GM12878 (cell line): ENCODE measurements at regions of chr5 and their contacts with region 1.

Region 1: GRCh38 chr5:132473019-132473531 is 17.5 kb downstream of the IRF1 start:
- DNase-seq: no peak
- ATAC-seq: peak; percentile 84
- H3K4me3 ChIP-seq: no peak overlapping the region
- H3K27ac ChIP-seq: peak overlapping the region; percentile 68
- H3K4me1 ChIP-seq: peaks cover 38% of the 10 kb centered on the region
- H3K27me3 ChIP-seq: no peaks in the 10 kb centered on the region
- CTCF ChIP-seq: no peak
- EP300 ChIP-seq: no peak
- POLR2A ChIP-seq: peak; percentile 38; the same call in 1 of the 2 replicates
- RAD21 ChIP-seq: no peak

Region 2: GRCh38 chr5:132410451-132411381 is 62.4 kb before region 1 on chr5:
- CTCF ChIA-PET with region 1: interaction called, 7 read pairs
- POLR2A ChIA-PET with region 1: interaction called, 6 read pairs
- RAD21 ChIA-PET with region 1: interaction called, 38 read pairs
- SMC1A ChIA-PET with region 1: interaction called, 16 read pairs
- in situ Hi-C with region 1: no loop called
- intact Hi-C with region 1: no loop called
- DNase-seq: no peak
- ATAC-seq: peak; percentile 68
- H3K4me3 ChIP-seq: peak overlapping the region; percentile 89
- H3K27ac ChIP-seq: peak overlapping the region; percentile 95
- H3K4me1 ChIP-seq: peaks cover 11% of the 10 kb centered on the region
- H3K27me3 ChIP-seq: no peaks in the 10 kb centered on the region
- CTCF ChIP-seq: peak; percentile 54 to 67 (median 61)
- EP300 ChIP-seq: peak in 1 of 2 experiments; percentile 39; a peak in 1 of 4 replicates
- POLR2A ChIP-seq: peak; percentile 90
- RAD21 ChIP-seq: peak; percentile 51; the same call in 1 of the 2 replicates

Region 3: DNA sequence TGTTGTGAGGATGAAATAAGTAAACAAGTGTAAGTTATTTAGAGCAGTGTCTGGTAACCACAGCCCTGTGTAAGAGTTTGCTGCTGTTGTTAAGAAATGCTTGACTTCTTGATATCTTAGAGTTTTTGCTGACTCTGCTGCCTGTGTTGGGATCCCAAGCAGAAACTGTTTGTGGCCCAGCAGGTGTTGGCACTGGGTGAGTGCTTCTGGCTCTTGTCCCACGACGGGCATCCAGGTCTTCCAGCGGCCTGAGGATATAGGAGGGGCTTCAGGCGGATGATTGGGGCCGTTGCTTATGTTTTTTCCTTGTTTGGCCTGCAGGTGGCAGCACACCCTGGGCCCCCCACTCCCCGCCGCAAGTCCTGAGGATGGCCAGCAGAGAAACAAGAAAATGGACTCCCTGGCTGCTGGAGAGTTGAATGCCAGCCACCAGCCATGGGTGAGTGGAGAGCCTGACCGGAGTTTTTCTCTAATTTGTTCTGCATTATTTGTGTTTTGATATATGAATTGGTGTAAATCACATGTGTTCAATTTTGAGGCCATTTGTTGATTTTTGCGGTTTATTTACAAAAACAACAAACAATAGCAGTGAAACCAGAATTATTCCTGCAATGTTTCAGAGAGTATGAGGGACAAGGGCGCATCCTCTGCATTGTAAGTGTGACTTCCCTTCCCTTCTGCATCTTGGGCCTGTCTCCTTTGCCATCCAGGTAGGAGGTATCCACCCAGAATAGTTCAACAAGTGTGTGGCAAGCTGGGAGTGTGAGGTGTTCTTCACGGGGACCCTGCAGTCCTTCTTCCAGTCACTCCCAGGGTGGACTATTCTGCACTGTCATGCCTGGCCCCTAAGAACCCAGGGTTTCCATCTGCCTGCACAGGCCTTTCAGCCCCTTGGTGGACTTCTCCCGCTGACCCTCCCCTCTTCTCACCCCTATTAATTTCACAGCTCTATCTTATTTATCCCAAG is 53.3 kb before region 1 on chr5:
- CTCF ChIA-PET with region 1: interaction called, 139 read pairs
- POLR2A ChIA-PET with region 1: interaction called, 389 read pairs
- RAD21 ChIA-PET with region 1: interaction called, 453 read pairs
- SMC1A ChIA-PET with region 1: interaction called, 300 read pairs
- in situ Hi-C with region 1: loop called (anchors 5 kb)
- intact Hi-C with region 1: no loop called
- DNase-seq: no peak
- ATAC-seq: peak; percentile 50
- H3K4me3 ChIP-seq: peak overlapping the region; percentile 31; the same call in 1 of the 2 replicates
- H3K27ac ChIP-seq: peak overlapping the region; percentile 94
- H3K4me1 ChIP-seq: peaks cover 79% of the 10 kb centered on the region
- H3K27me3 ChIP-seq: no peaks in the 10 kb centered on the region
- CTCF ChIP-seq: peak; percentile 74 to 81 (median 80)
- EP300 ChIP-seq: no peak
- POLR2A ChIP-seq: no peak
- RAD21 ChIP-seq: peak; percentile 78

Region 4: DNA sequence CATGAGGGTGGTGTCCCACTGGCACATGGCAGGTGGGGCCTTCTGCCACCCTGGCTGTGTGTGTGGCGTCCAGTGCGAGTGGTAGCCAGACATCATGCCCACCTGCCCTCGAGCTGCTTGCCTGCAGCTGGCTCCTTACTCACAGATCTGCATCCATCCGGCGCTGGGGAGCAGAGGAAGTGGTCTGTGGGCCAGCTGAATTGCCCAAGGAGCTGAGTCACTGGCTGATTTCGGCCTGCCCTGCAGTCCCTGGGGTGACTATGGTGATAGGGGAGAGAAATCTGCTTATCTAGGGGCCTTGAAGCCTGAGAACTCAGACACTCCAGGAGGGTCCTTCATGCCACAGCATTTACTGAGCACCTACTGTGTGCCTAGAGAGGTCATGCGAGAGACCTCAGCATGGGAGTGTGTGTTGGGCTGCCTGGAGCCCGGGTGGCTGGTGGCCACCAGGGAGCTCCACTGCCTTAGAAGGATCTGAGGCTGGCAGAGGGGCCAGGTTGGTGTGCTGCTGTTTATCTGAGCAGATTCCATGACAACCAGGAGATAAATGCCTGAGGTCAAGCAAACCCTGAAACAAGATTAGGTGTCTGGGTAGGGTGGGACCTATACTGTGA is 46.4 kb before region 1 on chr5:
- CTCF ChIA-PET with region 1: interaction called, 139 read pairs
- POLR2A ChIA-PET with region 1: interaction called, 389 read pairs
- RAD21 ChIA-PET with region 1: interaction called, 453 read pairs
- SMC1A ChIA-PET with region 1: interaction called, 300 read pairs
- in situ Hi-C with region 1: loop called (anchors 5 kb)
- intact Hi-C with region 1: no loop called
- DNase-seq: no peak
- ATAC-seq: peak; percentile 62
- H3K4me3 ChIP-seq: peak overlapping the region; percentile 49
- H3K27ac ChIP-seq: peak overlapping the region; percentile 94
- H3K4me1 ChIP-seq: peaks cover 90% of the 10 kb centered on the region
- H3K27me3 ChIP-seq: no peaks in the 10 kb centered on the region
- CTCF ChIP-seq: peak; percentile 47 to 56 (median 52)
- EP300 ChIP-seq: peak; percentile 17 to 67; a peak in 3 of 4 replicates
- POLR2A ChIP-seq: peak; percentile 88
- RAD21 ChIP-seq: peak; percentile 42; the same call in 1 of the 2 replicates

Region 5: GRCh38 chr5:132546108-132546507 is 73.0 kb after region 1 on chr5:
- CTCF ChIA-PET with region 1: no interaction called
- POLR2A ChIA-PET with region 1: no interaction called
- RAD21 ChIA-PET with region 1: no interaction called
- SMC1A ChIA-PET with region 1: no interaction called
- in situ Hi-C with region 1: no loop called
- intact Hi-C with region 1: no loop called
- DNase-seq: no peak
- ATAC-seq: peak; percentile 48
- H3K4me3 ChIP-seq: no peak overlapping the region
- H3K27ac ChIP-seq: no peak overlapping the region
- H3K4me1 ChIP-seq: 0 out of 2 replicates have a peak, but pooled peaks cover 3% of the 10 kb centered on the region
- H3K27me3 ChIP-seq: no peaks in the 10 kb centered on the region; a peak in 1 of 4 replicates
- CTCF ChIP-seq: no peak
- EP300 ChIP-seq: no peak
- POLR2A ChIP-seq: no peak
- RAD21 ChIP-seq: no peak

Region 6: DNA sequence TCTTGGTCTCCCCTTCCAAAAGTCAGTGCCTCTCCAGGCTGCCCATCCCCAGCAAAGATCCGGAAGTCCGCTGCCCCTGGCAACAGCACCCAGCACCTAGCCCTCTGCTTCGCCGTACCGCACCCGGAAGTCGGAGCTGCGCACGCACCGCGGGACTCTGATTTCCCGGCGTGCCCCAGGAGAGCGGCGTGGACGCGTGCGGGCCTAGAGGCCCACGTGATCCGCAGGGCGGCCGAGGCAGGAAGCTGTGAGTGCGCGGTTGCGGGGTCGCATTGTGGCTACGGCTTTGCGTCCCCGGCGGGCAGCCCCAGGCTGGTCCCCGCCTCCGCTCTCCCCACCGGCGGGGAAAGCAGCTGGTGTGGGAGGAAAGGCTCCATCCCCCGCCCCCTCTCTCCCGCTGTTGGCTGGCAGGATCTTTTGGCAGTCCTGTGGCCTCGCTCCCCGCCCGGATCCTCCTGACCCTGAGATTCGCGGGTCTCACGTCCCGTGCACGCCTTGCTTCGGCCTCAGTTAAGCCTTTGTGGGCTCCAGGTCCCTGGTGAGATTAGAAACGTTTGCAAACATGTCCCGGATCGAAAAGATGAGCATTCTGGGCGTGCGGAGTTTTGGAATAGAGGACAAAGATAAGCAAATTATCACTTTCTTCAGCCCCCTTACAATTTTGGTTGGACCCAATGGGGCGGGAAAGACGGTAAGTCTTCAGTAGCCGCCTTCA is 83.8 kb after region 1 on chr5 and contains the start of gene RAD50:
- CTCF ChIA-PET with region 1: no interaction called
- POLR2A ChIA-PET with region 1: no interaction called
- RAD21 ChIA-PET with region 1: no interaction called
- SMC1A ChIA-PET with region 1: no interaction called
- in situ Hi-C with region 1: no loop called
- intact Hi-C with region 1: no loop called
- DNase-seq: peak; percentile 86
- ATAC-seq: peak; percentile 99
- H3K4me3 ChIP-seq: peak within 1 kb of the TSS; percentile 88
- H3K27ac ChIP-seq: peak within 1 kb of the TSS; percentile 96
- H3K4me1 ChIP-seq: no peaks in the 10 kb centered on the region; the same call in 1 of the 2 replicates
- H3K27me3 ChIP-seq: no peaks in the 10 kb centered on the region
- CTCF ChIP-seq: no peak
- EP300 ChIP-seq: no peak
- POLR2A ChIP-seq: peak; percentile 99
- RAD21 ChIP-seq: no peak
- polyA plus RNA-seq, gene RAD50: 12.8 to 19.5 TPM

Region 7: GRCh38 chr5:133015466-133015865 is 542.4 kb after region 1 on chr5:
- CTCF ChIA-PET with region 1: no interaction called
- POLR2A ChIA-PET with region 1: no interaction called
- RAD21 ChIA-PET with region 1: no interaction called
- SMC1A ChIA-PET with region 1: no interaction called
- in situ Hi-C with region 1: no loop called
- intact Hi-C with region 1: no loop called
- DNase-seq: no peak
- ATAC-seq: no peak
- H3K4me3 ChIP-seq: no peak overlapping the region
- H3K27ac ChIP-seq: no peak overlapping the region
- H3K4me1 ChIP-seq: no peaks in the 10 kb centered on the region
- H3K27me3 ChIP-seq: no peaks in the 10 kb centered on the region
- CTCF ChIP-seq: no peak
- EP300 ChIP-seq: no peak
- POLR2A ChIP-seq: no peak
- RAD21 ChIP-seq: no peak